A549 (cell line): ENCODE measurements at regions of chr2 and their contacts with region 1.

Region 1: DNA sequence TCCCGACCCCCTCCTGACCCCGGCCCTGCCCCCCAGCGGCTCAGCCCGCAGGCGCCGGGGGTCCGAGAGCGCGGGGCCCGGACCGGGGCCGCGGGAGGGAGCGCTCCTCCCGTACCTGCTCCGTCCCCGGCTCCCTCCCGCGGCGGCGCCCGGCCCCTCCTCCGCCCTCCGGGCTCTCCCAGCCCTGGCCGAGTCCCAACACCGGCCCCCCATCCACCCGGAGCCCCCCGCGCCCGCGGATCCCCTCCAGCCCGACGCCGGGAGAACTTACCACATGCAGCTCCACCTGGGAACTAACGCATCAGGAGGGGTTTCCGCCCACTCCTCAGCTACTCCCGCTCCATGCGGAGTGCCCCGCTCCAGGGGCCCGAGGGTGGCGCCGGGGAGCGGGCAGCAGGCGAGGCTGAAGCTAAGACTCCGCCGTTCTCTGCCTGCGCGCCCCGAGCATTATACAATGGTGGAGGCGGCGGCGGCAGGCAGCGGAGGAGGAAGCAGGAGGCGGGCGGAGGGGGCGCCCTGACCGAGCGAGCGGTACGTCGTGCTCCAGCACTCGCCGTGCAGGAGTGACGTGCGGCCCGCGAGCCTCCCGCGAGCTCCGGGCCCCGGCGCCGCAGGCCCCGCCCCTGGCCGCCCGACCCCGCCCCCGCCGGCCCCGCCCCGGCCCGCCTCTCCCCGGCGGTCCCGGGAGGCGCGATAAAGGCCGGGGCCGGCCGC is at the start of gene SERTAD2:
- DNase-seq: peak; percentile 82 to 91
- ATAC-seq: peak; percentile 83 to 86
- H3K4me3 ChIP-seq: peak within 1 kb of the TSS; percentile 80
- H3K27ac ChIP-seq: peak within 1 kb of the TSS; percentile 93 to 99
- H3K4me1 ChIP-seq: peaks cover 49% of the 10 kb centered on the region
- CTCF ChIP-seq: peak; percentile 18; the same call in 1 of the 3 replicates
- EP300 ChIP-seq: no peak
- POLR2A ChIP-seq: peak; percentile 89
- RAD21 ChIP-seq: peak in 1 of 2 experiments; percentile 31; a peak in 1 of 5 replicates
- polyA plus RNA-seq, gene SERTAD2: 11.8 and 14.0 TPM in 2 replicates

Region 2: GRCh38 chr2:64562148-64562784 is 91.2 kb before region 1 on chr2:
- CTCF ChIA-PET with region 1: no interaction called
- POLR2A ChIA-PET with region 1: no interaction called
- DNase-seq: peak; percentile 6 to 41
- ATAC-seq: peak; percentile 73 to 85; a peak in 5 of 6 replicates
- H3K4me3 ChIP-seq: no peak overlapping the region
- H3K27ac ChIP-seq: no peak overlapping the region
- H3K4me1 ChIP-seq: 0 out of 3 replicates have a peak, but pooled peaks cover 3% of the 10 kb centered on the region
- CTCF ChIP-seq: peak; percentile 72
- EP300 ChIP-seq: no peak
- POLR2A ChIP-seq: no peak
- RAD21 ChIP-seq: peak; percentile 77 to 80

Region 3: GRCh38 chr2:64622443-64623241 is 30.9 kb before region 1 on chr2:
- CTCF ChIA-PET with region 1: interaction called, 8 read pairs
- POLR2A ChIA-PET with region 1: interaction called, 11 read pairs
- DNase-seq: no peak
- ATAC-seq: peak in 1 of 2 experiments; percentile 8; a peak in 2 of 6 replicates
- H3K4me3 ChIP-seq: no peak overlapping the region
- H3K27ac ChIP-seq: no peak overlapping the region
- H3K4me1 ChIP-seq: no peaks in the 10 kb centered on the region
- CTCF ChIP-seq: no peak
- EP300 ChIP-seq: no peak
- POLR2A ChIP-seq: no peak
- RAD21 ChIP-seq: no peak

Region 4: DNA sequence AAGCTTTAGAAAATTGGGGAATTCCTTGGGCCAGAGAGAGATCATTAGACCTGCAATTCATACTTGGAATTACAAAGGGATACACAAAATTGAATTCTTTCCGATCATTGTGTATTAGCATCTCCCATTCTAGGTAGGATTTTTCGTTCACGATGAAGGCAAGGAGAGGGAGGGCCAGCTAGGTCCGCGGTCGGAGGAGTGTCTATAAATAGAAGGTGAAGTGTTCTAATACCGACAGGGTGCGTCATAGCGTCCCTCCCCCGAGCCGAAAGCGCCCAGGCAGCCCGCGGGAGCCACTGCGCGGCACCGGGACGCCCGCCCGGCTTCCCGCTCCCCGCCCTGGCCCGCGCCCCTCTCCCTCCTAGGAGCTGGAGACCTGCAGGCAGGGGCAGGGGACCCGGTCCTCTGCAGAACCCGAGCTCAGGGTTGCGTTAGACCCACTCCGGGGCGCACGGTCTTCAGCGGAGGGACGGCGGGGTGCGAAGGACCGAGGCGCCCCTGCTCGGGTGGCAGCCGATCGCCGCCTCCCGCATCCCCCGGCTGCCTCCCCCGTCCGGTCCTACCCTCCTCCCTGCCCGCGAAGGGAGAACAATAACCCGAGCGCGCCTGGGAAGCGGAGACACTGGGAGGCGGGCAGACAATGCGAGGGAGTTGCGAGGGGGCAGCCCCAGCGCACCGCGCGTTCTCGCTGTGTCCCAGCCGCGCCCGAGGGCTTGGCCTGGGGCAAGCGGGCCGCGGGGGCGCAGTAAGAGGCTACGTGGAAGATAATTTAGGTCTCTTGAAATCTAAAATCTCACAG is 114.4 kb after region 1 on chr2:
- CTCF ChIA-PET with region 1: interaction called, 3 read pairs
- POLR2A ChIA-PET with region 1: interaction called, 38 read pairs
- DNase-seq: peak; percentile 84
- ATAC-seq: peak; percentile 93
- H3K4me3 ChIP-seq: peak overlapping the region; percentile 65
- H3K27ac ChIP-seq: peak overlapping the region; percentile 85 to 94
- H3K4me1 ChIP-seq: peaks cover 32% of the 10 kb centered on the region
- CTCF ChIP-seq: peak; percentile 22; the same call in 2 of the 3 replicates
- EP300 ChIP-seq: no peak
- POLR2A ChIP-seq: peak; percentile 37
- RAD21 ChIP-seq: peak; percentile 26 to 55; a peak in 4 of 5 replicates

Region 5: DNA sequence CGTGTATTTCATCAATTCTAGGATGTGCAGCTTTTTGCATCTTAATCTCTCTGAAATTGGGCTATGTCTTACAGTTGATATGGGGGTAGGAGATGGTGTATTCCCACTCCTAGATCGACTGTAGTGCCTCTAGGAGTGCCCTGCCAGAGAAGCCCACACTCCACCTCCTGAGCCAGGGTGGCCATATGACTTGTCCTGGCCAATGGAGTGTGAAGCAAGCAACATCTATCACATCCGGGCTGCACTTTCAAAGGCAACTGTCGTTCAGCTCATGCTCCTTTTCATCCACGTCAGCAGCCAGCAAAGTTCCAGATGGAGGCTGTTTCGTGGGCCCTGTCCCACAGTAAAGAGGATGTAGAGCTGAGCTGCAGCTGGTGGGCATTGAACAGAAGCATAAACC is 186.3 kb after region 1 on chr2:
- CTCF ChIA-PET with region 1: interaction called, 29 read pairs
- POLR2A ChIA-PET with region 1: interaction called, 47 read pairs
- DNase-seq: no peak
- ATAC-seq: no peak
- H3K4me3 ChIP-seq: no peak overlapping the region
- H3K27ac ChIP-seq: peak overlapping the region in 1 of 2 experiments; percentile 87; a peak in 3 of 6 replicates
- H3K4me1 ChIP-seq: peaks cover 50% of the 10 kb centered on the region
- CTCF ChIP-seq: no peak
- EP300 ChIP-seq: no peak
- POLR2A ChIP-seq: no peak
- RAD21 ChIP-seq: no peak

Region 6: DNA sequence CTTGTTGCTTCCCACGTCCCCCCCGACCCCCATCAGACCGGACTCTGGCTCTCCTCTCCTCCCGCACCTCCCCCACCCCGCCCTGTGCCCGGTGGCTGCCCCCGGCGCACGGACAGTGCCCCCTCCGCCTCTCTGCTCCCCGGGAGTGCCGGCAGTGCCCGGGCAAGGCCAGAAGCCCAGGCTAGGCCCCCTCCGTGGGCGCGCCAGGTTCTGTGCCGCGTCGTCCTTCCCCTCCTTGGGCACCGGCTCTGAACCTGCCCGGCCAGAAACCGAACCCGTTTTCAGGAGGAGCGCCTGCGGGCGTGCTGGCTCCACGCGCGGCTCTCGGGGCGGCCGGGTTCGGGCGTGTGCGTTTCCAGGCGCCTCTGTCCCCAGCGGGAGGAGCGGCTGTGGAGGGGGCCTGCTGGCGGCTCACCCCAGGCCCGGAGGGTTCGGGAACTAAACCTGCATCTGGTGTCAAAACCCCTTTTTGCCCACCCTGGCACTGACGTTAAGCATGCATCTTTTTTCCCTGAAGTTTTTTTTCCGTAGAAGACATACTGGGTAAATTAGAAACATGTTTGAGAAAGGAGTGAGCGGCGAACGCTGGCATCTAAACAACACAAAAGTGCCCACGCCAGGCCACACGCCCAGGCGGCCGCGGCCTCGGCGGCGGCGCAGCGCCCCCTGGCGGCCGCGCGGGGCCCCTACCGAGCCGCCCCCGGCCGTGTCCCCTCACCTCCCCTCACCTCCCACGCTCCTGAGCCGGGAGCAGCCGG is 211.7 kb after region 1 on chr2:
- CTCF ChIA-PET with region 1: interaction called, 22 read pairs
- POLR2A ChIA-PET with region 1: interaction called, 58 read pairs
- DNase-seq: peak; percentile 69 to 76
- ATAC-seq: peak; percentile 86 to 95
- H3K4me3 ChIP-seq: peak overlapping the region; percentile 62
- H3K27ac ChIP-seq: peak overlapping the region; percentile 85 to 92
- H3K4me1 ChIP-seq: peaks cover 20% of the 10 kb centered on the region
- CTCF ChIP-seq: peak; percentile 99
- EP300 ChIP-seq: no peak
- POLR2A ChIP-seq: no peak
- RAD21 ChIP-seq: peak; percentile 69 to 99